PC-3 (cell line): ENCODE measurements at regions of chr3 and their contacts with region 1.

Region 1: GRCh38 chr3:20185701-20186598 is at the start of gene SGO1:
- DNase-seq: peak; percentile 99
- ATAC-seq: peak; percentile 92
- H3K4me3 ChIP-seq: peak within 1 kb of the TSS; percentile 89
- H3K27ac ChIP-seq: peak within 1 kb of the TSS; percentile 66
- H3K4me1 ChIP-seq: peaks cover 16% of the 10 kb centered on the region
- H3K27me3 ChIP-seq: no peaks in the 10 kb centered on the region
- CTCF ChIP-seq: 0 out of 2 replicates have a peak, but pooled peaks have one; percentile 13
- total RNA-seq, gene SGO1: 12.6 and 13.6 TPM in 2 replicates

Region 2: GRCh38 chr3:19946832-19947548 is 239.0 kb before region 1 on chr3 and contains the start of gene RAB5A:
- CTCF ChIA-PET with region 1: no interaction called
- POLR2A ChIA-PET with region 1: no interaction called
- intact Hi-C with region 1: loop called (anchors 1 kb)
- DNase-seq: peak; percentile 99
- ATAC-seq: peak; percentile 88
- H3K4me3 ChIP-seq: peak within 1 kb of the TSS; percentile 87
- H3K27ac ChIP-seq: peak within 1 kb of the TSS; percentile 87
- H3K4me1 ChIP-seq: peaks cover 38% of the 10 kb centered on the region
- H3K27me3 ChIP-seq: no peaks in the 10 kb centered on the region
- CTCF ChIP-seq: no peak
- total RNA-seq, gene RAB5A: 61.3 and 86.8 TPM in 2 replicates

Region 3: DNA sequence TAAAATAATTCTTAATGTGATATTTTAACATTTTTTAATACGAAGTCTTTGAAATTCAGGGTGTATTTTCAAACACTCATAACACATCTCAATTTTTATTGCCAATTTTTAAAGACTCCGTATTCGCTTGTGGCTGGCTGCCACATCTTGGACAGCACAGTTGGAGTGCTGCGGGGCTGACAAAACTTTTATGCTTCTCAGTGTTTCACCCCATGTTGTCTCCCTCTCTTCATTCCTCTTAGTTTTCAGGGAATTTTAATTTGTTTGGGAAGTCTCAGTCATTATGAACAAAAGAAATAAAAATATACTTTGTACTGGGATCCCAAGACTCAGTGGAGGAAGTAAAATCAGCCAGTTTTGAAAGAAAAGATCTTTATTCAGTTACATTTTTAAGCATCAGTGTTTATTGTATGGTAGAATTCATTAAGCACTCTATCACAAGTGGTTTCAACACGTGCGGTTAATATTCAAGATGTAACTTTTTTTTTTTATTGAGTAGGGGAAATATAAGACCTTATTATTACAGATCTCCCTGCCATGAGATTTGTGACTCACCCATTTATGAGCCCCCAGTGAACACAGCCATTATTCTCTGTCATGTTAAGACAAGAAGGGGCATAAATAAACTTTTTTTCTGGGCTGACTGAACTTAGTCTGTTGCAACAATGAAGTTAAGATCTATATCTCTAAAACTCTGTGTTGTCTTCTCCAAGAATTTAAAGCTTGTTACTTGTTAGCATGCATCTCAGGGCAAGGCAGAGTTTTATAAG is 118.9 kb before region 1 on chr3:
- CTCF ChIA-PET with region 1: no interaction called
- POLR2A ChIA-PET with region 1: no interaction called
- intact Hi-C with region 1: loop called (anchors 1 kb)
- DNase-seq: peak; percentile 54
- ATAC-seq: peak; percentile 71
- H3K4me3 ChIP-seq: no peak overlapping the region
- H3K27ac ChIP-seq: 0 out of 2 replicates have a peak overlapping the region, but pooled peaks have one; percentile 1
- H3K4me1 ChIP-seq: peaks cover 21% of the 10 kb centered on the region
- H3K27me3 ChIP-seq: no peaks in the 10 kb centered on the region
- CTCF ChIP-seq: no peak

Region 4: GRCh38 chr3:20111836-20112235 is 74.1 kb before region 1 on chr3:
- CTCF ChIA-PET with region 1: no interaction called
- POLR2A ChIA-PET with region 1: no interaction called
- intact Hi-C with region 1: loop called (anchors 1 kb)
- DNase-seq: peak; percentile 84
- ATAC-seq: peak; percentile 94
- H3K4me3 ChIP-seq: peak overlapping the region; percentile 9; the same call in 1 of the 2 replicates
- H3K27ac ChIP-seq: peak overlapping the region; percentile 71
- H3K4me1 ChIP-seq: peaks cover 32% of the 10 kb centered on the region
- H3K27me3 ChIP-seq: no peaks in the 10 kb centered on the region
- CTCF ChIP-seq: no peak

Region 5: DNA sequence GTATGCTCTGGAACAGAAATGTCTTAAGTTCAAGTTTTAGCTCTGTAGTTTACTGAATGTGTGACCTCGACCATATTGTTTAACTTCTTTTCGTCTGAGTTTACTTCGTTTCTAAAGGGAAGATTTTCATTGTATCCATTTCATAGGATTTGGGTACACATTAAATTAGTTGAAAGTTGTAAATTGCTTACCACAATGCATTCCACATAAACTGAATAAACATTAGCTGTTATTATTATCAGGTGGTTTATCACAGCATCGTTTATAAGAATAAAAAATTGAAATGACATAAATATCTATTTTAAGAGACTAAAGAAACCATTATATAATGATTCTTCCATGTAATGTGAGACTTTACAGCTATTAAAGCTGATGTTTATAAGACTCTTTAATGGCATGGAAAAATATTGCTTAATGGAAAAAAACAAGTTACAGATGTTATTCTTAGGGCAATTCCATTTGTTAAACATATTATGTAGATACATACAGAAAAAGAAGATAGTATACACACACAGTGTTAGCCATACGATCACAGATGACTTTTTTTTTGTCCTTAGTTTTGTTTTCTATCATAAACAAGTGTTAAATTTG is 342.3 kb after region 1 on chr3:
- CTCF ChIA-PET with region 1: no interaction called
- POLR2A ChIA-PET with region 1: no interaction called
- intact Hi-C with region 1: no loop called
- DNase-seq: no peak
- ATAC-seq: no peak
- H3K4me3 ChIP-seq: no peak overlapping the region
- H3K27ac ChIP-seq: no peak overlapping the region
- H3K4me1 ChIP-seq: no peaks in the 10 kb centered on the region
- H3K27me3 ChIP-seq: no peaks in the 10 kb centered on the region
- CTCF ChIP-seq: no peak